Activated T-helper 1 cell treated with anti-CD3 and anti-CD28 coated beads, Interleukin-12 subunit alpha, Interleukin-12 subunit beta, Interleukin-2, Interleukin-4 antibody, amounts not matched to agents 30 ng/mL and 10 ng/mL and 1 ng/mL, durations not matched to agents 14 hours and 24 hours and 36 hours (primary cell): ENCODE measurements at regions of chr19 and their contacts with region 1.

Region 1: DNA sequence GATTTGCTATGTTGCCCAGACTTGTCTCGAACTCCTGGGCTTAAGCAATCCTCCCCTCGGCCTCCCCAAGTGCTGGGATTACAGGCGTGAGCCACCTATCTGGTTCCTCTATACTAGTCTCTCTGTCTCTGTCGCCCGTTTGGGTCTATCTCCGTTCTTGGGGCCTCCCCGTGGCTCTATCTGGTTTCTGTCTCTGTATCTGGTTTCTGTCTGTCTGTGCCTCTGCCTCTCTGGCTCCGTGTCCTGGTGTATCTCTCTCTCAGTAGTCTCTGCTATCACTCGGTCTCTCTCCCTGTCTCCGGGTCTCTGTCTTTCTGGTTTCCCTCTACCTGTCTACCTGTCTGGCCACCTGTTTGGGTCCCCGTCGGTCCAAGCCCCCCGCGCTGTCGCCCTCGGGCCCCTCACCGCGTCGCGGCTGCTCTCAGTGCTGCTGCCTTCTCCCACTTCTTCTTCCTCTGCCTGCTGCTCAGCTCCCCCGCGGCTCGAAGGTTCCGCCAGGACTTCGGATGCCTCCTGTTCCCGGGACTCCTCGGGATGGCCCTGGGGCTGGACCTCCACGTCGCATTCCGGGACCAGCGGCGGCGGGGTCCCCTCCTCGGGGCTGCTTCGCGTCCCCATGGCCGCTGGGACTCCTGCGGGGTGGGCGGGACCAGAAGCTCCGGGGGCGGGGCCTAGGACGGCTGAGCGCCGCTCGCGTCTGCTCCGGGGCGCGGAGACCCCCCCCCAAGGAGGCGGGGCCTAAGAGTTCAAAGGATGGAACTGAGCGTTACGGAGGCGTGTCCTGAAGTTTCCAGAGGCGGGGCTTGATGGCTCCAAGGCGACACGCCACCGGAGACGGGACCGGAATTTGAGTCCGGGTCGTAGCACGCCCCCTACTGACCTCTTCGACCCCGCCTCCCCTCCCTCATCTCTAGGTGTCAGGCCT is 783 bp downstream of the PHLDB3 start:
- DNase-seq: peak; percentile 98
- H3K4me3 Mint-ChIP-seq: peak overlapping the region; percentile 88
- H3K27ac Mint-ChIP-seq: peak overlapping the region; percentile 82
- H3K4me1 Mint-ChIP-seq: peaks cover 18% of the 10 kb centered on the region
- H3K27me3 Mint-ChIP-seq: no peaks in the 10 kb centered on the region

Region 2: DNA sequence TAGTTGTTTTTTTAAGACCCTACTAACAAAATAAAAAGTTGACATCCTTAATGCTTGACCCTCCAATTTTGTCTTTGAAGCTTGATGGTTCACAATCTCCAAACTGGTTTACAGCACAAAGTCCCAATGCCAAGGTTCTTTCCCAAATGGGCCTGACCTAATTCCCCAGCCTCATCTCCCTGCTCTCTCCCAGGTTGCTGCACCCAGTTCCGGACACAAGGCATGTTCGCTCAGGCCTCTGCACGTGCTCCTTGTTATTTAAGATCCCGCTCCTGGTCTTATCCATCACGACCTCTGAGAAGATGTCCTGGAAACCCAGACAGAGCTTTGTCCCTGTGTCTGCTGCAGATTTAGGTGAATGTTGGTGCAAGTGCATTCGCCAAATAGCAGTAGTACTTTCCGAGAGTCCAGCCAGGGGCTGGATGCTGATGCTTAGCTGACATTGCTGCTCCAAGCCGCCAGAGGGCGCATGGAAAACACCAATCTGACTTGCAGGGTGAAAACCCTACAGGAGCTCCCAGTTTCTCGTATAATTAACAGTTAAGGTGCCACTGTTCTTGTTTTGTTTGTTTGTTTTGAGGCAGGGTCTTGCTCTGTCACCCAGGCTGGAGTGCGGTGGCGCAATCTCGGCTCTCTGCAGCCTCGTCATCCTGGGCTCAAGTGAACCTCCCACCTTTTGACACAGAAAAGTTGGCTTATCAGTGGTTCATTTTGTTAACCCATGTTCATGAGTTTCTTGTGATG is 56.8 kb before region 1 on chr19:
- intact Hi-C with region 1: loop called (anchors 1 kb)
- DNase-seq: peak; percentile 68
- H3K4me3 Mint-ChIP-seq: no peak overlapping the region
- H3K27ac Mint-ChIP-seq: no peak overlapping the region
- H3K4me1 Mint-ChIP-seq: peaks cover 29% of the 10 kb centered on the region
- H3K27me3 Mint-ChIP-seq: no peaks in the 10 kb centered on the region

Region 3: GRCh38 chr19:43474986-43475705 is 28.6 kb before region 1 on chr19:
- intact Hi-C with region 1: loop called (anchors 1 kb)
- DNase-seq: peak; percentile 91
- H3K4me3 Mint-ChIP-seq: peak overlapping the region; percentile 77
- H3K27ac Mint-ChIP-seq: peak overlapping the region; percentile 89
- H3K4me1 Mint-ChIP-seq: peaks cover 14% of the 10 kb centered on the region
- H3K27me3 Mint-ChIP-seq: no peaks in the 10 kb centered on the region

Region 4: GRCh38 chr19:43519436-43520088 is 15.8 kb after region 1 on chr19:
- intact Hi-C with region 1: loop called (anchors 1 kb)
- DNase-seq: peak; percentile 63
- H3K4me3 Mint-ChIP-seq: peak overlapping the region; percentile 1
- H3K27ac Mint-ChIP-seq: peak overlapping the region; percentile 32
- H3K4me1 Mint-ChIP-seq: peaks cover 14% of the 10 kb centered on the region
- H3K27me3 Mint-ChIP-seq: no peaks in the 10 kb centered on the region

Region 5: GRCh38 chr19:43526884-43527859 is 23.4 kb after region 1 on chr19 and contains the start of gene ETHE1:
- intact Hi-C with region 1: loop called (anchors 1 kb)
- DNase-seq: peak; percentile 79
- H3K4me3 Mint-ChIP-seq: peak within 1 kb of the TSS; percentile 79
- H3K27ac Mint-ChIP-seq: peak within 1 kb of the TSS; percentile 77
- H3K4me1 Mint-ChIP-seq: peaks cover 32% of the 10 kb centered on the region
- H3K27me3 Mint-ChIP-seq: no peaks in the 10 kb centered on the region
- total RNA-seq, gene ETHE1: 55.1 and 55.4 TPM in 2 replicates

Region 6: GRCh38 chr19:43532962-43533545 is 29.3 kb after region 1 on chr19 and contains the start of gene ZNF575:
- intact Hi-C with region 1: loop called (anchors 1 kb)
- DNase-seq: peak; percentile 81
- H3K4me3 Mint-ChIP-seq: peak within 1 kb of the TSS; percentile 96
- H3K27ac Mint-ChIP-seq: peak within 1 kb of the TSS; percentile 99
- H3K4me1 Mint-ChIP-seq: peaks cover 23% of the 10 kb centered on the region
- H3K27me3 Mint-ChIP-seq: no peaks in the 10 kb centered on the region
- total RNA-seq, gene ZNF575: 1.4 and 2.6 TPM in 2 replicates